GM12878 (cell line): ENCODE measurements at regions of chr18 and their contacts with region 1.

Region 1: DNA sequence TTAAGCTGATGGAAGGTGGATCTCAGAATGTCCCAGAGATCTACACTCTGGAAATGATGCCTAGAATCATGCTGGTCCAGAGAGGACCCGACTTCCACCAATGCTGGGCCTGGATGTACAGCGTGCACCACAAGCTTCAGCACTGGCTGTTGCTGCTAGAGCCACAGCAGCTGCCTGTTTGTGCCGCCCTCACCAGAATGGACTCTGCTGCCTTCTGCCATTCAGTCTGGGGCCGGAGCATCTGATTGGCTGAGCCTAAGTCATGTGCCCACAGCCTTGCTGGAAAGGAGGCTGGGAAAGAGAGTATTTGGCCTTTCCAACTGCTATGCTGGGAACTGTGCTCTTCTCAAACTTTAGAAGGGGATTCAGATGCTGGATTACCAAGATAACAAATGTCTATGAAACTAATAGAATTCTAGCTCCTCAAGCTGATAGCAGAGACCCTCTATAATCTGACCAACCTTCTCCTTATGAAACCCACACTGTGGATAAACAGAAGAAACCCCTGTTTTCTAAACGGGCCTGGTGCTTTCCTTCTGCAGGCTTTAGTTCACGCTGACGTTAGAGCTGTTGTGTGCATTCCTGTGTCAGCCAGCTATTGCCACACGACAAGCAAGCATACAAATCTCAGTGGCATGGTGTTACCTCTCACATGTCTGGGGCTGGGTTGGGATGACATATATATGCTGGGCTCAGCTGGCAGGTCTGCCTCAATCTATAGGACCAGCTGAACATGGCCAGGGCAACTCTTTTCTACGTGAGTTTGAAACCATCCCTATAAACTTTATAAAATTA is 4.1 kb upstream of the LOXHD1 start:
- DNase-seq: no peak
- ATAC-seq: no peak; the same call in 2 of the 3 replicates
- H3K4me3 ChIP-seq: no peak overlapping the region
- H3K27ac ChIP-seq: no peak overlapping the region
- H3K4me1 ChIP-seq: no peaks in the 10 kb centered on the region
- H3K27me3 ChIP-seq: 0 out of 4 replicates have a peak, but pooled peaks cover 0 to 3% of the 10 kb centered on the region in 2 experiments
- CTCF ChIP-seq: no peak
- EP300 ChIP-seq: no peak
- POLR2A ChIP-seq: no peak
- RAD21 ChIP-seq: no peak

Region 2: GRCh38 chr18:46148810-46149209 is 512.3 kb before region 1 on chr18:
- CTCF ChIA-PET with region 1: interaction called, 72 read pairs
- POLR2A ChIA-PET with region 1: no interaction called
- RAD21 ChIA-PET with region 1: interaction called, 13 read pairs
- SMC1A ChIA-PET with region 1: interaction called, 10 read pairs
- in situ Hi-C with region 1: loop called (anchors 5 kb)
- intact Hi-C with region 1: loop called (anchors 1 kb)
- DNase-seq: no peak
- ATAC-seq: peak; percentile 88
- H3K4me3 ChIP-seq: no peak overlapping the region
- H3K27ac ChIP-seq: no peak overlapping the region
- H3K4me1 ChIP-seq: no peaks in the 10 kb centered on the region
- H3K27me3 ChIP-seq: no peaks in the 10 kb centered on the region
- CTCF ChIP-seq: peak; percentile 48 to 74 (median 67)
- EP300 ChIP-seq: no peak
- POLR2A ChIP-seq: no peak
- RAD21 ChIP-seq: peak; percentile 70

Region 3: GRCh38 chr18:46281185-46282176 is 379.7 kb before region 1 on chr18:
- CTCF ChIA-PET with region 1: interaction called, 60 read pairs
- POLR2A ChIA-PET with region 1: no interaction called
- RAD21 ChIA-PET with region 1: interaction called, 39 read pairs
- SMC1A ChIA-PET with region 1: interaction called, 19 read pairs
- in situ Hi-C with region 1: loop called (anchors 5 kb)
- intact Hi-C with region 1: loop called (anchors 1 kb)
- DNase-seq: no peak
- ATAC-seq: peak; percentile 96
- H3K4me3 ChIP-seq: no peak overlapping the region
- H3K27ac ChIP-seq: no peak overlapping the region
- H3K4me1 ChIP-seq: no peaks in the 10 kb centered on the region
- H3K27me3 ChIP-seq: no peaks in the 10 kb centered on the region
- CTCF ChIP-seq: peak; percentile 85 to 97 (median 87)
- EP300 ChIP-seq: no peak
- POLR2A ChIP-seq: no peak
- RAD21 ChIP-seq: peak; percentile 95

Region 4: DNA sequence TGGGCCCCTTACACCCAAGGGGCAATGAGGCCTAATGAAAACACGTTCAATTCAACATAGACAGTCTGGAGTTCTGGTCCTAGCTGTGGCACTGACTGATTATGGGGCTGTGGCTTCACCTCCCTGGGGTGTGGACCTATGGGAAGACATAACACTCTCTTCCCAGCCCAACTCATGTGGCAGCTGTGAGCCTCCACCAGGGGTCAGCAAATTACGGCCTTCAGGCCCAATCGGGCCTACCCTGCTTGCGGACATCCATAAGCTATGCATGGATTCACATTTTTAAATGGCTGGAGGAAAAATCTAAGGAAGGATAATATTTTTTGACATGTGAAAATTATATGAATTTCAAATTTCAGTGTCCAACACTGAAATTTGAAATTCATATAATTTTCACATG is 105.4 kb before region 1 on chr18:
- CTCF ChIA-PET with region 1: interaction called, 16 read pairs
- POLR2A ChIA-PET with region 1: no interaction called
- RAD21 ChIA-PET with region 1: interaction called, 4 read pairs
- SMC1A ChIA-PET with region 1: interaction called, 8 read pairs
- in situ Hi-C with region 1: no loop called
- intact Hi-C with region 1: loop called (anchors 1 kb)
- DNase-seq: no peak
- ATAC-seq: peak; percentile 83
- H3K4me3 ChIP-seq: no peak overlapping the region
- H3K27ac ChIP-seq: no peak overlapping the region
- H3K4me1 ChIP-seq: no peaks in the 10 kb centered on the region
- H3K27me3 ChIP-seq: no peaks in the 10 kb centered on the region; a peak in 1 of 4 replicates
- CTCF ChIP-seq: peak; percentile 47 to 57 (median 57); a peak in 5 of 6 replicates
- EP300 ChIP-seq: no peak
- POLR2A ChIP-seq: no peak
- RAD21 ChIP-seq: peak; percentile 74

Region 5: GRCh38 chr18:46917108-46917802 is 256.1 kb after region 1 on chr18 and contains the starts of genes KATNAL2 and PIAS2:
- CTCF ChIA-PET with region 1: interaction called, 6 read pairs
- POLR2A ChIA-PET with region 1: no interaction called
- RAD21 ChIA-PET with region 1: interaction called, 12 read pairs
- SMC1A ChIA-PET with region 1: interaction called, 3 read pairs
- in situ Hi-C with region 1: no loop called
- intact Hi-C with region 1: loop called (anchors 10 kb)
- DNase-seq: no peak
- ATAC-seq: peak; percentile 90
- H3K4me3 ChIP-seq: peak within 1 kb of the TSS; percentile 94
- H3K27ac ChIP-seq: peak within 1 kb of the TSS; percentile 82
- H3K4me1 ChIP-seq: no peaks in the 10 kb centered on the region; the same call in 1 of the 2 replicates
- H3K27me3 ChIP-seq: no peaks in the 10 kb centered on the region
- CTCF ChIP-seq: peak in 1 of 3 experiments; percentile 42; a peak in 2 of 6 replicates
- EP300 ChIP-seq: no peak
- POLR2A ChIP-seq: peak; percentile 97
- RAD21 ChIP-seq: peak; percentile 53; the same call in 1 of the 2 replicates
- polyA plus RNA-seq, gene KATNAL2: 0.53 to 0.95 TPM
- polyA plus RNA-seq, gene PIAS2: 4.0 to 7.2 TPM